AG04450 (cell line): ENCODE measurements at regions of chr15 and their contacts with region 1.

Region 1: GRCh38 chr15:75647370-75648155 is at the start of gene SNX33:
- DNase-seq: no peak
- H3K4me3 ChIP-seq: peak within 1 kb of the TSS; percentile 90
- H3K27ac ChIP-seq: peak within 1 kb of the TSS; percentile 95
- H3K27me3 ChIP-seq: no peaks in the 10 kb centered on the region
- CTCF ChIP-seq: peak; percentile 57
- polyA plus RNA-seq, gene SNX33: 14.2 and 17.4 TPM in 2 replicates

Region 2: DNA sequence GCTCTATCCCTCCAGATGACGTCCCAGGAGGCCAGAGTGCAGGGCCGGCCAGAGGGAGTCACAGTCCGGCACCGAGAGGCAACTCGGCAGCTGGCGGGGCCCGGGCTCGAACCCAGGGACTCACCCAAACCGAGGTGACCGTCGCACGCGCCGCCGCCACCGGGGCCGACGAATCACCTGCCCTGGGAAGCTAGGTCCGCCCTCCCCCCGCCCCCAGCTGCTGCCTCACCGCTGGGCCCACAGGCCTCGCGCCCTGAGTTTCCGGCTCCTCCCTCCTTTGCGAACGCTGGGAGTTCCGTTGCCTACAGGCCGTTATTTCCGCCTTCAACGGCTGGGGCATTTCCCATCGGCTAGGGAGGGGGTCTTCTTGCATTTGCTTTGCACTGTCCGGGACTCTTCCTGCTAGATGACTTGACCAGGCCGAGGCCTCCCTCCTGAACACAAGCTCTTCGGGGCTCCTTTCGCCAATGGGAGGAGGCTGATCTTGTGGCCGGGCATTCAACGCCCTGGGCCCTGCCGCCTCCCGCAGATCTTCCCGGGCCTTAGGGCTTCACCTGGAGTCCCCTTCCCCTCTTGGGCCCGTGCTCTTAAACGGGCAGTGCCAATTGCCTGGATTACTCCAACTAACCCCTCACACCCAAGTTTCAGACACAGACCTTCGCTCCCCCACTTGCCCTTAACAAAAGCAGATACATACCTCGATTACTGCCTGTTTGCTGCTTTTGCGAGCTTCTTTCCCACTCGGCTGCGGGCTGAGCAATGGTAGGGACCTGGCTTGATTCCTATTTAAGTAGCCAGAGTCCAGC is 21.8 kb before region 1 on chr15 and contains the start of gene SNUPN:
- CTCF ChIA-PET with region 1: interaction called, 7 read pairs
- POLR2A ChIA-PET with region 1: interaction called, 18 read pairs
- DNase-seq: no peak
- H3K4me3 ChIP-seq: peak within 1 kb of the TSS; percentile 88
- H3K27ac ChIP-seq: peak within 1 kb of the TSS; percentile 97
- H3K27me3 ChIP-seq: no peaks in the 10 kb centered on the region
- CTCF ChIP-seq: no peak
- polyA plus RNA-seq, gene SNUPN: 31.1 and 36.6 TPM in 2 replicates

Region 3: DNA sequence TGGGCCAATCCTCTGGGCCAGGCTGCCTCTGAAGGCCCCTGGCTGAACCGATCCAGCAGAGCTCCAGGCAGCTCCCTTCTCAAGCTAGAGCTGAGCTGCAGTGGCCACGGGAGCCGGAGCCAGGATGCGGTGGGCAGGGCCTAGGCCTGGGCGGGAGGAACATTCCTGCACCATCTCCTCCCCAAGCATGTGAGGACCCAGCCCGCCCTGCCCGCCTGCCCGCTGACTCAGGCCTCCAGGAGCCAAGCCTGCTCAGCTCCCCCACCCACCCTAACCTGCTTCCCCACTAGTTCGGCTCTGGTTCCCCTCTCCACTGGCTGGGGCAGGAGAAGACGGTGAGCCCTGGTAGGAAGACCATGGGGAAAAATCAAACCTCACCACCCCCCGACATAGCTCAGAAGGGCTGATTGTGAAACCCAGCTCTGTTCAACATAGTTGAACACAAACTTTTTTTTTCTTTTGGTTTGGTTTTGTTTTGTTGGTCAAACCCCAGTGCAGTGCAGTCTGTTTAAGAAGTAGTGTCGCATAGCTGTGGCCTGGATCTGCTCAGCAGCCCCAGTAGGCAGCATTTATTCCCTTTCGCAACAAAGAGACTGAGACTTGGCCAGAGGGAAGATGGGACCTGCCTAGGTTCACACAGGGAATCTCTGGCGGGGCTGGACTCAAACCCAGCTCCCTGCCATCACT is 13.7 kb after region 1 on chr15:
- CTCF ChIA-PET with region 1: interaction called, 10 read pairs
- POLR2A ChIA-PET with region 1: interaction called, 31 read pairs
- DNase-seq: peak; percentile 81
- H3K4me3 ChIP-seq: peak overlapping the region; percentile 29
- H3K27ac ChIP-seq: peak overlapping the region; percentile 98
- H3K27me3 ChIP-seq: no peaks in the 10 kb centered on the region
- CTCF ChIP-seq: no peak

Region 4: GRCh38 chr15:75666823-75667501 is 19.4 kb after region 1 on chr15:
- CTCF ChIA-PET with region 1: interaction called, 10 read pairs
- POLR2A ChIA-PET with region 1: interaction called, 31 read pairs
- DNase-seq: peak; percentile 91
- H3K4me3 ChIP-seq: no peak overlapping the region
- H3K27ac ChIP-seq: peak overlapping the region; percentile 99
- H3K27me3 ChIP-seq: no peaks in the 10 kb centered on the region
- CTCF ChIP-seq: no peak

Region 5: GRCh38 chr15:75672646-75673425 is 25.3 kb after region 1 on chr15:
- CTCF ChIA-PET with region 1: interaction called, 4 read pairs
- POLR2A ChIA-PET with region 1: interaction called, 31 read pairs
- DNase-seq: peak; percentile 56
- H3K4me3 ChIP-seq: no peak overlapping the region
- H3K27ac ChIP-seq: peak overlapping the region; percentile 87
- H3K27me3 ChIP-seq: no peaks in the 10 kb centered on the region
- CTCF ChIP-seq: no peak

Region 6: GRCh38 chr15:76098685-76099084 is 451.1 kb after region 1 on chr15:
- CTCF ChIA-PET with region 1: no interaction called
- POLR2A ChIA-PET with region 1: no interaction called
- DNase-seq: no peak
- H3K4me3 ChIP-seq: no peak overlapping the region
- H3K27ac ChIP-seq: no peak overlapping the region
- H3K27me3 ChIP-seq: peaks cover 8% of the 10 kb centered on the region
- CTCF ChIP-seq: no peak